Thyroid gland (tissue), 4 donors: ENCODE measurements at regions of chr1 and their contacts with region 1.

Region 1: DNA sequence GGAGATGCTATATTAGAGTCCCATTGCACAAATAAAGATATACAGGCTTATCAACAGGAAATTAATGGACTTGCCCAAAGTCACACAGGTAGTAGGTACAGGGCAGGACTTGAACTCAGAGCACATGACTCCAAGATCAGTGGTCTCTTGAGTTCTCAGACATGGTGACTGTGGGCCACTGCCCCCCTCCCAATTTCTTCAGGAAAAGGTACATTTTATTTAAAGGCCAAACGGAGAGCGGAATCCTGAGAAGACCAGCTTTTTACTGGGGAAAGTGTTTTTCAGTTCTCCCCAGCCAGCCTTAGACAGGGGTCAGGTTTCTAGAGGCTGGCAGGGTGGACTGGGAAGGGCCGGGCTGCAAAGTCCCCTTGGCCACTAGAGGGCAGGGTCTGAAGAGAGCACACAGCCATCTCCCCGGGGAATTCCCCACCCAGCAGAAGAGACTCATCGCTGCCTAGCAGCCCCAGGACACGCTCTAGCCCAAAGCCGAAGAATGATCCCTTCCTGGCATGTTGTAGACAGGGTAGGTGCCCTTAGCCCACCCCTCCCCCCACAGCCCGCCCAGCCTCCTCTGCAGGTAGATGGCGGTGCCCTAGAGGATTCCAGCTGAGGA is 29.7 kb downstream of the ACP6 start:
- DNase-seq: peak; percentile 78
- H3K4me3 ChIP-seq: no peak overlapping the region
- H3K27ac ChIP-seq: no peak overlapping the region
- H3K4me1 ChIP-seq: peaks cover 0 to 5% of the 10 kb centered on the region in 2 donors
- H3K27me3 ChIP-seq: no peaks in the 10 kb centered on the region
- CTCF ChIP-seq: peak; percentile 18 to 87 (median 72)
- POLR2A ChIP-seq: no peak

Region 2: DNA sequence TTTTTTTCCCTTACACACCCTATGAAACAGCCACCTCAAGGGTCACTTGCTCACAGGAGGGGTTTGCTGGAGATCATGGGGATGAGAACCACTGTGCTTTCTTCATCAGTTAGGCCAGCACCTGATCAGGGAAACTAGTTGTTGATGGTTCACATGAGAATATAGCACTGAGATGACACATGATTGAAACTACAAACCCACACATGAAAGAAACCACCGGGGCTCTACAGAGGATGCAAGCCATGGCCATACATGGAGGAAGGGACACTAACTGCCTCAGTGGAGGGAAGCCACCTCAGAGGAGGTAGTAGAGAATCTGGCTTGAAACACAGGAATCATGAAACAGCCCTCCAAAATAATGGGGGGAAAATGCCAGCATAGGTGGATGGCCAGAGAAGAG is 531.6 kb before region 1 on chr1:
- intact Hi-C with region 1: no loop called
- DNase-seq: no peak
- H3K4me3 ChIP-seq: no peak overlapping the region
- H3K27ac ChIP-seq: no peak overlapping the region
- H3K4me1 ChIP-seq: no peaks in the 10 kb centered on the region
- H3K27me3 ChIP-seq: no peaks in the 10 kb centered on the region
- CTCF ChIP-seq: no peak
- POLR2A ChIP-seq: no peak

Region 3: GRCh38 chr1:147611021-147611426 is 29.6 kb before region 1 on chr1:
- intact Hi-C with region 1: no loop called
- DNase-seq: no peak
- H3K4me3 ChIP-seq: no peak overlapping the region
- H3K27ac ChIP-seq: no peak overlapping the region
- H3K4me1 ChIP-seq: no peaks in the 10 kb centered on the region
- H3K27me3 ChIP-seq: no peaks in the 10 kb centered on the region
- CTCF ChIP-seq: no peak
- POLR2A ChIP-seq: no peak

Region 4: DNA sequence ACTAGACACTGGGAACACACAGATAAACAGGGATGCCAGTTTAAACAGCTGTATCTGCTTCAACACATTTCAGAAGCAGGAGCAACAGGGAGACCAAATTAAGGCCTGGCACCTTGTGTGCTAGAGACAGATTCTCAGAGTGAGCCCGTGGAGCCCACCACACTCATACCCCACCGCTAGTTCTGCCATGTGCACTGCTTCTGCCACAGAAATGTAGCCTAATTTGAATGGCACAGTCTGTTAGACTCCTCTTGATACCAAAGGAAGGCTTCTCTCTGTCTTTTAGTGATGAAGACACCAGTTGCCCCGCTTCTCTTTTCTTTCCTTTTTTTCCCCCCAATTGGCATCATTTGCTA is 59.0 kb after region 1 on chr1:
- intact Hi-C with region 1: loop called (anchors 5 kb)
- DNase-seq: no peak
- H3K4me3 ChIP-seq: no peak overlapping the region
- H3K27ac ChIP-seq: no peak overlapping the region
- H3K4me1 ChIP-seq: no peaks in the 10 kb centered on the region
- H3K27me3 ChIP-seq: no peaks in the 10 kb centered on the region
- CTCF ChIP-seq: no peak
- POLR2A ChIP-seq: no peak

Region 5: DNA sequence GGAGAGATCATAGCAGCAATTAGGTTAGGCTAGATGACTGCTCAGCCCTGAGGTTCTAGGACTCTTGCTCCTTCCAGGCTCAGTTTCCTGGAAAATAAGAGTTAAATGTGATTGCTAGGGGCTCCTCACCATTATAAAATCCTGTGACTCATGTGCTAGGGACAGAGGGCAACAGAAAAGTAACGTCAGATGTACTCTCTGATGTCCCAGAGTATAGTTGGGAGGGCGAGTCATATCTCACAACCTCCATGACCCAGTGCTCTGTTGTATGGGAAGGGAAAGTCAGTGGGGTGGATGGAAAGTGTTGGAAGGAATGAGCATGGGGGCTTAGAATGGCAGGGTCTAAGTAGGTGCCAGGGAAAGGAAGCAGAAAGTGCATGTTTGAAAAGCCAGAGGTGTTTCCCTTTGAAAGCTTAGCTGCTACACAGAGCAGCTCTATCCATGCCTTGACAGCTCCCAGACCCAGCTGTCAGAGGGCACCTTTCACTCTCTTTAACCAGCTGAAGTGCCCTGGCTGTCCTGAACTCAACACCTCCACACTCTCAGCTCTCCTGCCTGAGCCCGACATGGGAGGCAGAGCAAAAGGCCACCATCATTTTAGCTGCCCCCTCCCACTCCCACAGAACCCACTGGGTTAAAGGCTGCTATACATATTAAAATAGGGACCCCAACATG is 108.2 kb after region 1 on chr1:
- intact Hi-C with region 1: no loop called
- DNase-seq: no peak
- H3K4me3 ChIP-seq: no peak overlapping the region
- H3K27ac ChIP-seq: no peak overlapping the region
- H3K4me1 ChIP-seq: no peaks in the 10 kb centered on the region
- H3K27me3 ChIP-seq: no peaks in the 10 kb centered on the region
- CTCF ChIP-seq: no peak
- POLR2A ChIP-seq: no peak

Region 6: GRCh38 chr1:147890177-147890790 is 249.6 kb after region 1 on chr1:
- intact Hi-C with region 1: loop called (anchors 10 kb)
- DNase-seq: peak; percentile 61 to 73
- H3K4me3 ChIP-seq: no peak overlapping the region
- H3K27ac ChIP-seq: no peak overlapping the region
- H3K4me1 ChIP-seq: no peaks in the 10 kb centered on the region
- H3K27me3 ChIP-seq: no peaks in the 10 kb centered on the region
- CTCF ChIP-seq: peak in 4 of 6 experiments; percentile 33 to 48 (median 44)
- POLR2A ChIP-seq: no peak